ENCODE measurements at regions of chr9 and their contacts with region 1.

Region 1: DNA sequence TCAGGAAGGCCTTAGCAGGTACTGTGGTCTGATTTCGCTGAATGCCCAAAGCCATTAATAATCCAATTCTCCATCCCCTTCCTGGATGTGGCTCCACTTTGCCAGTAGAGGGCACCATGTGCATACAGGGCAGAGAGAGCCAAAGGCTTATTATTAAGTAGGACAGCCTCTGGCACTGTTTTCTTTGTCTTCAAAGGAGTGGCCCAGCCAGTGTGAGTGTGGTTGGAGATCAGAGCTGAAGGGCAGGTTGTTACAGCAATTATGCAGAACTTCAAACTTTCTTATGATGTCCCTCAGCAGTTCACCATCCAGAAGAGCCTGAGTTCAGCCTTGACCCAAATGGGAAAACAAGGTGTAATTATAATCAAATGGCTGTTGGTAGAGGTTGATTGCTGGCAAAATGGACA is 38.6 kb upstream of the CEMIP2 start:
- DNase-seq: peak; percentile 75
- H3K4me3 Mint-ChIP-seq: no peak overlapping the region
- H3K27ac Mint-ChIP-seq: peak overlapping the region; percentile 15
- H3K4me1 Mint-ChIP-seq: peaks cover 7% of the 10 kb centered on the region
- H3K27me3 Mint-ChIP-seq: no peaks in the 10 kb centered on the region

Region 2: DNA sequence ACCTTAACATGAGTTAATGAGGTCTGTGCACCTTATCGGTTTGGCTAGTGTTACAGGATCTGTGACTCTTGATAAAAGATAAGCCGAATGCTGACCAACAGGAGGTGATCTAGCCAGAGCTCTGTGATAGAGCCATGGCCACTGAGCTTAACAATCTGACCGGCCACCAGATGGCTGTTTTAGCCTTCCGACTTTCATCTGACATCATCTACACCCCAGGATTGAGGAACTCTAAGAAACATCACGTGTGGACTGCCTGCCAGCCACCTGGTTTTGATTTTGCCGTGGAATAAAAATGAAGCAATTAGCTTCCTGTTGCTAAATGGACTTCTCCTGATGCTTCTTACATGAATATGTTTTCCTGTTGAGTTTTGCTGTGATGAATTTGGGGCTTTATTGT is 319.8 kb before region 1 on chr9:
- CTCF ChIA-PET with region 1: no interaction called
- POLR2A ChIA-PET with region 1: no interaction called
- DNase-seq: no peak
- H3K4me3 Mint-ChIP-seq: no peak overlapping the region
- H3K27ac Mint-ChIP-seq: no peak overlapping the region
- H3K4me1 Mint-ChIP-seq: no peaks in the 10 kb centered on the region
- H3K27me3 Mint-ChIP-seq: peaks cover 6% of the 10 kb centered on the region

Region 3: DNA sequence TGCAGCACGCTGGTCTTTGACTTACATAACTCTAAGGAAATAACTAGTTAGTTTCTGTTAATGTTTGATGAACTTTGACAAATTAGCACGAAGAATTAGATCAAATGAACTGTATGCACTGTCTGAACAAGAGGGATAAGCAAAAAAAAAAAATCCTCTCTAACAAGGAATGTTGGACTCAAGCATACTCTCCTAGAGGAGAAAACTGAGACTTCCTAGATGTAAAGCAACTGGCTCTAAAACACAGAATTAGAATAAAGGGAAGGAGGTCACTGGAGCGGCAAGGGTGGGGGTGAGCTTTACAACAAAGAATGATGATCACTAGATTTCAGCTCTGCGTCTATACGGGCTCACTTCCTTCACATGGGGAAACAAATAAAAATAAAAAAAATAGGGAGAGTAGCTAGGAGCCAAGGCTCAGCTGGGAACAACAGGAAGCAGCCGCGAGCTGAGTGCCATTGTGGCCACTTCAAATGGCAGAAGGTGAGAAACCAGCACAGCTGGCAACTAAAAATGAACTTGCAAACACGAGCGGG is 10.1 kb after region 1 on chr9:
- CTCF ChIA-PET with region 1: interaction called, 14 read pairs
- POLR2A ChIA-PET with region 1: no interaction called
- DNase-seq: no peak
- H3K4me3 Mint-ChIP-seq: no peak overlapping the region
- H3K27ac Mint-ChIP-seq: no peak overlapping the region
- H3K4me1 Mint-ChIP-seq: peaks cover 13% of the 10 kb centered on the region
- H3K27me3 Mint-ChIP-seq: no peaks in the 10 kb centered on the region

Measured in activated CD4-positive, alpha-beta T cell treated with anti-CD3 and anti-CD28 coated beads, Interleukin-2, amount 10 ng/mL, durations not matched to agents 7 days and 5 days (primary cell).